Panc1 (cell line): ENCODE measurements at regions of chr14 and their contacts with region 1.

Region 1: DNA sequence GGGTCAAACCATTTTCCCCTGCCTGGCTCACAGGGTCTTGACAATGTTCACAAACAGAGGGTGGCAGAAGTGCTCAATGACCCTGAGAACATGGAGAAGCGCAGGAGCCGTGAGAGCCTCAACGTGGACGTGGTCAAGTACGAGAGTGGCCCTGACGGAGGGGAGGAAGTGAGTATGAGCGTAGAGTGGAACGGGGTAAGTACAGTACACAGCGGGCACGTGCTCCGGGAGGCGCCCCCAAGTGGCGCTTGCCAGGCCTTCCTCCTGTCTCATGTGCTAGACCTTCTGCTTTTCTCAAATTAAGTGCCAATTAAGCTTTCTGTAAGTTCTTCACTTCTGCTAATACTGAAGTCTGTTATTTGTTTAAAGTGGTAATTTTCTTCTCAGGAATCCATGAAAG is 35.9 kb downstream of the XRCC3 start:
- DNase-seq: no peak
- ATAC-seq: 0 out of 2 replicates have a peak, but pooled peaks have one; percentile 75
- H3K4me3 ChIP-seq: no peak overlapping the region
- H3K27ac ChIP-seq: no peak overlapping the region
- H3K4me1 ChIP-seq: no peaks in the 10 kb centered on the region
- H3K27me3 ChIP-seq: no peaks in the 10 kb centered on the region
- CTCF ChIP-seq: no peak; the same call in none of the 2 replicates

Region 2: DNA sequence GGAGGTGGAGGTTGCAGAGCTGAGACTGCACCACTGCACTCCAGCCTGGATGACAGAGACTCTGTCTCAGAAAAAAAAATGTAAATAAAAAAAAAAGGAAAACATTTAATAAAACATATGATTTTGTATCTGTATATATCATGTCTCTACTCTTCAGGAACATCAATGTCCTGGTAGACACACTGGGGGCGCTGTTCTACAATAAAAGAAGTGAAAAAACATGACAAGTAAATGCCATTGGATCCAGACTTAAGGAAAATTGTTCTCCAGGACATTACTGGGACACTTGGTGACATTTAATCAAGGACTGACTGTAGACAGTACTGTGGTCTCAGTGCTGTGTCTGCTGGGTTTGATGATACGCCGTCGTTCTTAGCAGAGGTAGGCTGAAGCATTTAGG is 65.8 kb before region 1 on chr14:
- CTCF ChIA-PET with region 1: no interaction called
- POLR2A ChIA-PET with region 1: no interaction called
- in situ Hi-C with region 1: no loop called
- intact Hi-C with region 1: loop called (anchors 10 kb)
- DNase-seq: no peak
- ATAC-seq: 0 out of 2 replicates have a peak, but pooled peaks have one; percentile 62
- H3K4me3 ChIP-seq: no peak overlapping the region
- H3K27ac ChIP-seq: no peak overlapping the region
- H3K4me1 ChIP-seq: no peaks in the 10 kb centered on the region
- H3K27me3 ChIP-seq: no peaks in the 10 kb centered on the region
- CTCF ChIP-seq: no peak; the same call in 1 of the 2 replicates